Thyroid gland (tissue), 4 donors: ENCODE measurements at regions of chr20 and their contacts with region 1.

Region 1: GRCh38 chr20:21702553-21703470 is 2.7 kb upstream of the PAX1 start:
- DNase-seq: peak; percentile 81 to 91
- H3K4me3 ChIP-seq: peak overlapping the region in 2 of 3 donors; percentile 18 to 23
- H3K27ac ChIP-seq: no peak overlapping the region
- H3K4me1 ChIP-seq: peaks cover 3 to 22% of the 10 kb centered on the region in 2 donors
- H3K27me3 ChIP-seq: peaks cover 12% of the 10 kb centered on the region
- CTCF ChIP-seq: peak in 5 of 6 experiments; percentile 58 to 84 (median 75)
- POLR2A ChIP-seq: no peak

Region 2: DNA sequence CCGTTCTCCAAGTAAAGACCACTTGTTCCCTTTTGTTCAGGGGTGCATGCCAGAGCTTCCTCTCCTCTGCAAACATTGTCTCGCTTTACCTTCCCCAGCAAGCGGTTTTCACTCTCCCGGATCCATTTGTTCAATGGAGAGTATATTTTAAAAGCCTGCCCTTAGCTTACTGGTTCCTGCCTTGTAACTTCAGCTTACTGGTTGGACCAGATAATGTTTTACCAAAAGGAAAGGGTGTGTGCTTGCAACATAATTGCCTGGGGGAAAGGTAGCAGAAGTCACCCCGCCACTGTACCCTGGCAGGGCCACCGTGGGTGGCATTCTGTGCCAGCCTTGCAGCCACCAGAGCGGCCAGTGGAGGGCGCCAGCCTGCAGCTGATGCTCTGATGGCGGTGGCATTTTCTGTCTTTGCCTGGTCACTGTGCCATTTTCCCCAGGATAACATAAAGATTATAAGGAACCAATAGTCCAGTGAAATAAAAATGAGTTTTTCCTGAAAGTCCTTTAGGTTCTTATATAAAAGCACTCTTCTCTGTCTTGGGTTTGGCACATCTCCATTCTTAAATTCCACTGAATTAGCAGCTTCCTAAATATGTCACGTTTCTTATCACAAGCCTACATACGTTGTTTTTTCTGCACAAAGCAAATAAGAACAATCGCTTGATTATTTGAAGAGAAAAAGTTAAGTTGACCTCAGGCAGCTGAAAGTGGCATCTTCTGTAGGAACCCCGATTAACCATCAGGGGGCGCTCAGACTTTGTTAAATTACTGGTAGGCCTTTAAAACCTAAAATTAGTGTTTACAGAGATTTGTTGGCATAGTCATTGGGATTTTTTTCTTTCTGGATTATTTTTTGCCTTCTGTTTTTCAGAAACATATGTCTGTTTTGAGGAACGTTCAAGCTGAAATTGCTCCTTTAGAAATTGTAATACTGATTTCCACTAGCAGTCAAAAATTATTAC is 467.0 kb before region 1 on chr20:
- intact Hi-C with region 1: no loop called
- DNase-seq: peak; percentile 68 to 76
- H3K4me3 ChIP-seq: no peak overlapping the region
- H3K27ac ChIP-seq: peak overlapping the region; percentile 13 to 77 (median 49)
- H3K4me1 ChIP-seq: peaks cover 25 to 35% of the 10 kb centered on the region in 2 donors
- H3K27me3 ChIP-seq: no peaks in the 10 kb centered on the region
- CTCF ChIP-seq: peak; percentile 28 to 74 (median 65)
- POLR2A ChIP-seq: no peak

Region 3: GRCh38 chr20:21767739-21768223 is 65.0 kb after region 1 on chr20:
- intact Hi-C with region 1: loop called (anchors 5 kb)
- DNase-seq: peak; percentile 55 to 75
- H3K4me3 ChIP-seq: no peak overlapping the region
- H3K27ac ChIP-seq: no peak overlapping the region
- H3K4me1 ChIP-seq: peaks cover 0 to 5% of the 10 kb centered on the region in 2 donors
- H3K27me3 ChIP-seq: no peaks in the 10 kb centered on the region
- CTCF ChIP-seq: peak; percentile 20 to 70 (median 66)
- POLR2A ChIP-seq: no peak

Region 4: DNA sequence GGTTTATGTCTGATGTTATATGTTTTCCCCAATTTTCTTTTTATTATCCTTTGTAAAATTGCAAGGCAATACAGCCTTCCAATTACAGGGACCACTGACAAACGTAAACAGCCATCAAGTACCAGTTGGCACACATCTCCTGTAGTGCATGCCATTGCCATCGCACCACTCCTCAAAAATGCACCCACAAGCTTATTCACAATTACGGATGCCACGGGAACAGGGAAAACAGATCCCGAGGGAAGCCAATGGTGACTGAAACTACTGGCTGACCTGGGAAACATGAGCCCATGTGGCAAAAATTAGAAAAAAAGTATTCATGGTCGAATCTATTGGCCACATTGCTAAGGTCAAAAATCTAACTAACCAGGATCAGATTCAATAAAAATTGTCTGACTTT is 397.9 kb after region 1 on chr20:
- intact Hi-C with region 1: loop called (anchors 5 kb)
- DNase-seq: no peak
- H3K4me3 ChIP-seq: no peak overlapping the region
- H3K27ac ChIP-seq: no peak overlapping the region
- H3K4me1 ChIP-seq: no peaks in the 10 kb centered on the region
- H3K27me3 ChIP-seq: no peaks in the 10 kb centered on the region
- CTCF ChIP-seq: no peak
- POLR2A ChIP-seq: no peak